ENCODE measurements at regions of chr12 and their contacts with region 1.

Region 1: GRCh38 chr12:9883175-9883574 is 1.9 kb downstream of the KLRF2 start:
- DNase-seq: no peak
- H3K4me3 ChIP-seq: no peak overlapping the region
- H3K27ac ChIP-seq: no peak overlapping the region
- H3K4me1 ChIP-seq: peaks cover 0 to 6% (median under 1%) of the 10 kb centered on the region in 4 experiments; a peak in 2 of 7 replicates
- H3K27me3 ChIP-seq: no peaks in the 10 kb centered on the region
- CTCF ChIP-seq: no peak
- EP300 ChIP-seq: no peak
- POLR2A ChIP-seq: no peak
- RAD21 ChIP-seq: no peak

Region 2: DNA sequence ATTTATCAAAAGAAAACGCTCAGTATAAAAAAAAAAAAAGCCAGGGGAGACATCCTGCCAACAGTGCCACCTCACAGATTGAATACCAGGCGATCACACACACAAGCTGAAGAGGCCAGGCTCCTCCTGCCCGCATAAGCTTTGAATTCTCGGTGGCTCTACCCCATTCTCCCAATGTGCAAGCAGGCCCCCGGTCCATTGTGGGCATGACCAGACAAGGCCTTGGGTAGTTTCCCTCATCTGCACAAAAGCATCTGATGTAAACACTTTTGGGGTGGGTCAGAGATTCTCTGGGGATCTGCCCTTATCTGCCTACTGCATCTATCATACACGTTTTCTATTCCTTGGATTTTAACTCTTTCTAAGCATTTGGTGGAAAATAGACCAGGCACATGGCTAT is 14.4 kb after region 1 on chr12:
- CTCF ChIA-PET with region 1: interaction called, 3 read pairs
- POLR2A ChIA-PET with region 1: interaction called, 14 read pairs
- DNase-seq: no peak
- H3K4me3 ChIP-seq: no peak overlapping the region
- H3K27ac ChIP-seq: no peak overlapping the region
- H3K4me1 ChIP-seq: peaks cover 0 to 15% (median 3%) of the 10 kb centered on the region in 4 experiments; a peak in 1 of 7 replicates
- H3K27me3 ChIP-seq: no peaks in the 10 kb centered on the region
- CTCF ChIP-seq: no peak
- EP300 ChIP-seq: no peak
- POLR2A ChIP-seq: no peak
- RAD21 ChIP-seq: no peak

Region 3: GRCh38 chr12:9977916-9978315 is 94.7 kb after region 1 on chr12:
- CTCF ChIA-PET with region 1: no interaction called
- POLR2A ChIA-PET with region 1: no interaction called
- DNase-seq: no peak
- H3K4me3 ChIP-seq: no peak overlapping the region
- H3K27ac ChIP-seq: no peak overlapping the region
- H3K4me1 ChIP-seq: no peaks in the 10 kb centered on the region
- H3K27me3 ChIP-seq: no peaks in the 10 kb centered on the region
- CTCF ChIP-seq: no peak
- EP300 ChIP-seq: no peak
- POLR2A ChIP-seq: no peak
- RAD21 ChIP-seq: no peak

Region 4: GRCh38 chr12:10331642-10332239 is 448.6 kb after region 1 on chr12:
- CTCF ChIA-PET with region 1: no interaction called
- POLR2A ChIA-PET with region 1: no interaction called
- DNase-seq: no peak
- H3K4me3 ChIP-seq: no peak overlapping the region
- H3K27ac ChIP-seq: no peak overlapping the region
- H3K4me1 ChIP-seq: no peaks in the 10 kb centered on the region
- H3K27me3 ChIP-seq: no peaks in the 10 kb centered on the region
- CTCF ChIP-seq: peak in 2 of 3 experiments; percentile 76 to 90; a peak in 3 of 4 replicates
- EP300 ChIP-seq: no peak
- POLR2A ChIP-seq: no peak
- RAD21 ChIP-seq: peak; percentile 90 to 91